ENCODE measurements at regions of chr17 and their contacts with region 1.

Region 1: GRCh38 chr17:15257258-15257788 is 7.8 kb downstream of the PMP22 start:
- DNase-seq: peak; percentile 84
- H3K4me3 ChIP-seq: peak overlapping the region; percentile 6
- H3K27ac ChIP-seq: no peak overlapping the region
- H3K4me1 ChIP-seq: peaks cover 15% of the 10 kb centered on the region
- H3K27me3 ChIP-seq: peaks cover 2% of the 10 kb centered on the region
- CTCF ChIP-seq: peak; percentile 87

Region 2: DNA sequence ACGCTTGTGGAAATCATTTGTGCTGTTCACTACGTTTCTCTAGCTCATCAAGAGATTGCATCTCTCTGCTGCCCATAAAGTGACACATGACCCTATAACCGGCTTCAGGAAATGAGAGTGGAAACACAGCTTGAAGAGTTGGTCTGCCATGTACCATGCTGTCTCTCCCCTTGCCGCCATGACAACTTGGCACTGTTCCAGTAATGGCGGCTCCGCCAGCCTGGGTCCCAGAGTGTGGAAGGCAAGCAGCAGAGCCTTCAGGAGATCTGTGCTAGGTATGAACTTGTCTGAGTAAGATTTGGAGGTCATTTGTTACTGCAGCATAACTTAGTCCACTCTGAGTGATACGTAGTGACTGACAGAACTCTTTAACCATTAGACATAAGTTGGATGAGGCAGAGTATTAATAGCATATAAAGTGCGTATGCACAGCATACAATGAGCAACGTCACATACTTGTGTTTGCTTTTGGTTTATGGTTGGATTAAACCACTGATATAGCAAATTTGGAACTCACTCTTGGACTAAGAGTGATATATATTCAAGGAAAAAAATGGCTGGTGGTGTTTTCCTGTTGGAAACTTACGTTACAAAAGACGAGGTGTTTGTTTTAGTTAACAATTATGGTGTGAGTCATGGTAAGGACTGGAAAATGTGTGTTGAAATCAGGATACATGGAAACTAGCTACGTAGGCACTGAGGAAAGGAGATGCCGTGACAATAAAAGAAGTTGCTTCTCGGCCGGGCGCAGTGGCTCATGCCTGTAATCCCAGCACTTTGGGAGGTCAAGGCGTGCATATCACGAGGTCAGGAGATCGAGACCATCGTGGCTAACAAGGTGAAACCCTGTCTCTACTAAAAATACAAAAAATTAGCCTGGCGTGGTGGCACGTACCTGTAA is 32.2 kb after region 1 on chr17:
- intact Hi-C with region 1: no loop called
- DNase-seq: no peak
- H3K4me3 ChIP-seq: no peak overlapping the region
- H3K27ac ChIP-seq: no peak overlapping the region
- H3K4me1 ChIP-seq: no peaks in the 10 kb centered on the region
- H3K27me3 ChIP-seq: no peaks in the 10 kb centered on the region
- CTCF ChIP-seq: no peak

Region 3: GRCh38 chr17:15409721-15410250 is 152.5 kb after region 1 on chr17:
- intact Hi-C with region 1: loop called (anchors 2 kb)
- DNase-seq: no peak
- H3K4me3 ChIP-seq: no peak overlapping the region
- H3K27ac ChIP-seq: peak overlapping the region; percentile 34
- H3K4me1 ChIP-seq: no peaks in the 10 kb centered on the region
- H3K27me3 ChIP-seq: no peaks in the 10 kb centered on the region
- CTCF ChIP-seq: no peak

Region 4: DNA sequence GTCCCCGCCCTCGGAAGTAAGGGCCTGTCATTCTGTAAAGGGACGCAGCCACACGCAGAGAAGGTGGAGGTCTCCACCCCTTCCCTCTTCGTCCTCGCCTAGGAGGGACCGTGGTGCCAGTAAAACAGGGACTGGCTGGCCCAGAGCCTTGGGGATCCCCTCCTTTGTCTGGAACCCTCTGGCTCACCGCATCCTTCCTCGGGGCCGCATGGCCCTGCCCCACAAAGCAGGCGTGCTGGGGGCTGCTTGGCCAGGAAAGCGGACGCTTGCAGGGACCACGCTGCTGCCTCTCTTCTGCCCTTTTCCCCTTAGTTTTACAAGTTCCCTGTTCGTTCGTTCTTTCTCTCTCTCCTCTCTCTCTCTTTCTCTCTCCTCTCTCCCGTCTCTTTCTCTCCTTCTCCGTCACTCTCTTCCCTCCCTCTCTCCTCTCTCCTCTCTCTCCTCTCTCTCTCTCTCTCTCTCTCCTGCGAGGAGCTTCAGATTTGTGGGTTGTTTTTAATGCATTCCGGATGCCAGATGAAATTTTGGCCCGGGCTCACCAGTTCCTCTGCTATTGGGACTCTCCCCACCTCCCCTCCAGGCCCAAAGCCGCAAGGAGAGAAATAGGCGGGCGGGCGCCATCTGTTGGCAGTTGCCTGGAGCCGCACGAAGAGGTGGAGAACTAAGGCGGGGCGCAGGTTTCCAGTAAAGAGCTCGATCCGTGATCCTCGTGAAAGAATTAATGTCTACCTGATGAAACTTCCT is 245.2 kb after region 1 on chr17:
- intact Hi-C with region 1: loop called (anchors 1 kb)
- DNase-seq: peak; percentile 86
- H3K4me3 ChIP-seq: no peak overlapping the region
- H3K27ac ChIP-seq: no peak overlapping the region
- H3K4me1 ChIP-seq: no peaks in the 10 kb centered on the region
- H3K27me3 ChIP-seq: no peaks in the 10 kb centered on the region
- CTCF ChIP-seq: peak; percentile 82

Region 5: DNA sequence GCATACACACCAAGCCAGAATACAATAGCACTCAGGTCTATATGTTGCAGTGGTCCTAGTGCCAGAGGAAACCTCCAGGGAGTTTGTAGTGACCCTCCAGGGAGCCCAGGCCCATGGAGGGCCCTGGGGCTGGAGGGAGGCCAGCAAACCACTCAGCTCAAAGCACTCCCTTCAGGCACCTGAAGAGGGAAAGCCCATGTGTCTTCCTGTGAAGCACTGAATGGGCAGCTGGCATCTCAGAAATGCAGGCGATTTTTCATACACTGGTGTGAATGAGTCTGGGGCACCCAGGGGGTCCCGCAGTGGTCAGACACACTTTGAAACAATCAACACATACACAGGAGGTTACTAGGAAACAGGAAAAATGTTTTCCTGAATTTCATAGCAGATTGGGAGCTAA is 487.6 kb after region 1 on chr17:
- intact Hi-C with region 1: no loop called
- DNase-seq: no peak
- H3K4me3 ChIP-seq: no peak overlapping the region
- H3K27ac ChIP-seq: no peak overlapping the region
- H3K4me1 ChIP-seq: no peaks in the 10 kb centered on the region
- H3K27me3 ChIP-seq: no peaks in the 10 kb centered on the region
- CTCF ChIP-seq: no peak